Activated CD4-positive, alpha-beta memory T cell treated with anti-CD3 and anti-CD28 coated beads, Interleukin-2, amount 10 ng/mL, durations not matched to agents 7 days and 5 days (primary cell): ENCODE measurements at regions of chr18 and their contacts with region 1.

Region 1: DNA sequence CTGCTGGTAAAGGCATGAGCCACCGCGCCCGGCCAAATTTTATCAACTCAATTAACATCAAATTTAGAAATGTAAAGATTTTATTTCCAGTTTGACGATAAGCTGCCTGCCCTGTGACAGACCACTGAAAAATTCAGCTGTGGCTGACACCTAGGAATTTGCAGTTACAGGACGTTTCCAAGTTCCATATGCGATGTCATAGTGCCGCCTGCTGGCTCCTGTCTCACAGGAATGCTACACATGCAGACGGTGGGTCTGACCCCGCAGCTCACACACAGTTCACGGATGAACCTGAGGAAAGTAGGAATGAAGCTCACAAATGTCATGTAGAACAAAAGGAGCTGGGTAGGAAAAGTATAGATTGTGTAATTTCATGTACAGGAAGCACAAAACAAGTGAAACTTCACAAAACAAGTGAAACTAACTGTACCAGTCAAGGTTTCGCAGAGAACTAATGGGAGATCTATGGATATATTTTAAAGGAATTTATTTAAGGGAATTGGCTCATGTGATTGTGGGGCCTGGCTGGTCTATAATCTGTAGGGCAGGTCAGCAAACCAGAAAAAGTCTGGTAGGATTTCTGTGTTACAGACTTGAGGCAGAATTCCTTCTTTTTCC is 13.2 kb upstream of the SEH1L start:
- DNase-seq: peak; percentile 79
- H3K4me3 Mint-ChIP-seq: no peak overlapping the region
- H3K27ac Mint-ChIP-seq: no peak overlapping the region
- H3K4me1 Mint-ChIP-seq: peaks cover 4% of the 10 kb centered on the region
- H3K27me3 Mint-ChIP-seq: peaks cover 15% of the 10 kb centered on the region

Region 2: DNA sequence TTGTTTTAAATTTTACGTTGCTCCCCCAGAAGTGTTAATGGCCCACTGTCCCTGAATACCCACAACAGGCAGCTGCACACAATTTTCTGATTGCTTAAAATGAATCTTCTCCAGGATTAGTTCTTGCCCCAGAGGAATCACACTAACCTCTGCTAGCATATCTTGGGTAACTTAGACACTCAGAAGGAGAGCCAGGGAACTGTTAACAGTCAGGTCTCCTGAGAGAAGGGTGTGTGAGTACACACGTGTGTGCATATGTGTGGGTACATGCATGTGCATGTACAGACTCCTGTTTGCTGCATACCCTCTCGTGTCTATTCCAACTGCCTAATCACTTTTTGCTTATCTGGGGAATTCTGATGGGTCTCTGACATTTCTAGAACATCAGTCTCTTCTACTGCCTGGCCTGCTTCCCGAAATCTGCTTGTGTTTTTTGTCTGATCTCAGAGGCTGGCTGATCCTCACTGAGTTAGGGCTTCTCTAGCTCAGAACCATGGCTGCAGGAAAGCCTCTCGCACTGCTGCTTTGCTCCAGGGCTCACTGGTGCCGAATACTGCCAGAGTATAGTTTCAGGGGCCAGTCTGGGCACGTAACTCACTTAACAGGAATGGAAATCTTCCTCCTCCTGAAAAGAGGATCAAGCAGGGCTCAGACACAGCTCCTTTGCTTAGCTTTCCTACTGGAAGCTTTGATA is 464.0 kb before region 1 on chr18:
- CTCF ChIA-PET with region 1: no interaction called
- POLR2A ChIA-PET with region 1: no interaction called
- DNase-seq: no peak
- H3K4me3 Mint-ChIP-seq: no peak overlapping the region
- H3K27ac Mint-ChIP-seq: no peak overlapping the region
- H3K4me1 Mint-ChIP-seq: no peaks in the 10 kb centered on the region
- H3K27me3 Mint-ChIP-seq: no peaks in the 10 kb centered on the region

Region 3: DNA sequence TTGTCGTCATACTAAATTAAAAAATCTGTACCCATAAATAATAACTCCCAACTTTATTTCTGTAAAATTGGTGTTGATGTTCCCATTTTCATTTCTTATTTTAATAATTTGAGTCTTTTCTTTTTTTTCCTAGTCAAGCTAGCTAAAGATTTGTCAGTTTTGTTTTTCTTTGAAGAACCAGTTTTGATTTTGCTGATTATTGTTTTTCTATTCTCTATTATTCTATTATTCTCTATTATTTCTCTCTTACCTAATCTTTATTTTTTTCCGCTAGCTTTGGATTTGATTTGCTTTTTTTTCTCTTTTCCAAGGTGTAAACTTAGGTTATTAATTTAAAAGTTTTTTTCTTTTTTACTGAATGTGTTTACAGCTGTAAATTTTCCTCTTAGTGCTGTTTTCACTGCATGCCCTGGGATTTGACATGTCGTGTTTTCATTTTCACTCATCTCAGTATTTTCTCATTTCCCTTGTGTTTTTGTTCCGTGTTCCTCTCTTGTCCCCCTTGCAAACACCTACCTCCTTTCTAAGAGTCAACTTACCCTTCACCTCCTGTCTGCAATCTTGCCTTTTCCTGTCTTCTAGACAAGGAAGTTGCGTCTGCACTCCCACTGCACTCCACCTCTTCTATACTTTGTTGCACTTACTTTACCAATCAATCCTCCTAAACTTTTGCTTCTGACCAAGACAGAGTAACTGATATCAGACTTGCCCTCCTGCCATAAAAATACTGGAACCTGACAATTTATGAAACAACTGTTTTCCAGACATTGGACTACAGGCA is 212.9 kb before region 1 on chr18:
- CTCF ChIA-PET with region 1: interaction called, 82 read pairs
- POLR2A ChIA-PET with region 1: no interaction called
- DNase-seq: no peak
- H3K4me3 Mint-ChIP-seq: no peak overlapping the region
- H3K27ac Mint-ChIP-seq: peak overlapping the region; percentile 58
- H3K4me1 Mint-ChIP-seq: peaks cover 20% of the 10 kb centered on the region
- H3K27me3 Mint-ChIP-seq: no peaks in the 10 kb centered on the region

Region 4: DNA sequence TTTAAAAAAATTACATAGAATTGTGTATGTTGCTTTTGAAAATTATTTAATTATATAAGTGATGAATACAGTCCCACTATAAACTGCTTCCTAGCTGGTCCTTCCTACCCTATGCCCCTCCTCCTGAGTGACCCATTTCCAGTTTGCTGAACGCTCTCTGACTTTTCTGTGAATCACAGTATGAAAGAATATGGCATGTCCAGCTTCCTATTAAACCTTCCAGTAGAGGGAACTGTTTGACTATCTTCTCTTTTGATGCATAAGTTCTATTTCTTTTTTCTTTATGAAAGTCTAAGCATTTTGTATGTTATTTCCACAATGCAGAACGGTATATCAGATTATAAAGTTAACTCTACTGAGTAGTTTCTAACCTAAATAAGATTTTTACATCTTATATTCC is 190.5 kb before region 1 on chr18:
- CTCF ChIA-PET with region 1: interaction called, 57 read pairs
- POLR2A ChIA-PET with region 1: no interaction called
- DNase-seq: no peak
- H3K4me3 Mint-ChIP-seq: no peak overlapping the region
- H3K27ac Mint-ChIP-seq: no peak overlapping the region
- H3K4me1 Mint-ChIP-seq: peaks cover under 1% of the 10 kb centered on the region
- H3K27me3 Mint-ChIP-seq: peaks cover 2% of the 10 kb centered on the region

Region 5: GRCh38 chr18:12890506-12890905 is 44.1 kb before region 1 on chr18:
- CTCF ChIA-PET with region 1: interaction called, 20 read pairs
- POLR2A ChIA-PET with region 1: no interaction called
- DNase-seq: no peak
- H3K4me3 Mint-ChIP-seq: no peak overlapping the region
- H3K27ac Mint-ChIP-seq: no peak overlapping the region
- H3K4me1 Mint-ChIP-seq: peaks cover 17% of the 10 kb centered on the region
- H3K27me3 Mint-ChIP-seq: peaks cover 11% of the 10 kb centered on the region

Region 6: GRCh38 chr18:12921178-12921577 is 13.4 kb before region 1 on chr18:
- CTCF ChIA-PET with region 1: interaction called, 16 read pairs
- POLR2A ChIA-PET with region 1: interaction called, 3 read pairs
- DNase-seq: peak; percentile 27
- H3K4me3 Mint-ChIP-seq: peak overlapping the region; percentile 4
- H3K27ac Mint-ChIP-seq: peak overlapping the region; percentile 10
- H3K4me1 Mint-ChIP-seq: peaks cover 14% of the 10 kb centered on the region
- H3K27me3 Mint-ChIP-seq: peaks cover 17% of the 10 kb centered on the region

Region 7: DNA sequence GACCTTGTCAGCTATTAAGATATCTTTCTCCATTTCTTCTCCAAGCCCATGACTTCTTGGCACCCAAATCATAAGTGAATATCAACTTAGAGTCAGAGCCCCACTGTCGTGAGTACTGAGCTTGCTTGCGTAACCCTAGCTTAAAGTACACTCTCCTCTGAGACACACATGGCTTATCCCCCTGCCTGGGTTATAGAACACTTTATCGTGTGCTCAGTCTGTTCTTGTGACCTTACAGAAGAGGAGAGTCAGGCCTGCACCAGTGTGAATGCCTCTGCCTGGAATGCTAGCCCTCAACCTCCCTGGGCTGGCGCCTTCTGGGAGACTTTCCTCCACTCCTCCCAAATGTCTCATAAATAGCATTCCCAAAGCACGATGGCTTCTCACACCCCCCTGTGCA is 135.9 kb after region 1 on chr18:
- CTCF ChIA-PET with region 1: no interaction called
- POLR2A ChIA-PET with region 1: no interaction called
- DNase-seq: no peak
- H3K4me3 Mint-ChIP-seq: no peak overlapping the region
- H3K27ac Mint-ChIP-seq: no peak overlapping the region
- H3K4me1 Mint-ChIP-seq: peaks cover 11% of the 10 kb centered on the region
- H3K27me3 Mint-ChIP-seq: no peaks in the 10 kb centered on the region